CD4-positive, alpha-beta memory T cell (primary cell): ENCODE measurements at regions of chr2 and their contacts with region 1.

Region 1: DNA sequence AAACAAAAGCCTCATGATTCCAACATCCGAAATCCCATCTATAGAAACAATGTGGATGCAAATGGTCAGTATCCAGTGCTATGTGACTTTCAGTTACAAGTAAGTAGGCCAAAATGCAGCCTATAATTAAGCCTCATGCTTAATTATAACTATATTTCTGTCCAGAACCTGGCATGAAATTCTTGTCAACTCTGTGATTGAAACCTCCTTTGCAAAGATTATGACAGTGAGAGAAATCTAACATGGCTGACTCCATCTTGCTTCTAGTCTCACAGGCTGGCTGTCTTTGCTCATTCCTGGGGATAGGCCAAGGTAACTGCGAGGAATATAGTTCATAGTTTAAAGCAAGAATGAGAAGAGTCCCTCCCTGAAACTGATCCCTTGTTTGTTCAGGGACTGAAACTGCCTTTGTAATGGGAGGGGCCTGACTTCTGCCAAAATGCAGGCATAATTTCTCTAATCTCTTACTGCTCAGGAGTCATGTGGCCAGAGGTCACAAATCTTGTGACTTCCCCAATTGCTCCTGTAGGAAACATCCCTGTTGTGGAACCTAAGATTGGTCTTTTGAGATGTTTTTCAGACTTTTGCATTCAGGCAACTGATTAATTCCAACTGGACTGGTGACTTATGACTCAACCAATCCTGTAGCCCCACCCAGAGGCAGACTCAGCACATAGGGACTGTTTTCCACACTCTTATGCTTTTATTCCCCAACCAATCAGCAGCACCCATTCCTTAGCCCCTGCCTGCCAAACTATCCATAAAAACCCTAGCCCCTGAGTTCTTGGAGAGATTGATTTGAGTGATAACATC is 84.5 kb upstream of the TLK1 start:
- DNase-seq: no peak
- H3K4me3 ChIP-seq: no peak overlapping the region
- H3K4me3 Mint-ChIP-seq: peak overlapping the region in 1 of 8 donors; percentile 21
- H3K27ac ChIP-seq: no peak overlapping the region
- H3K27ac Mint-ChIP-seq: peak overlapping the region in 2 of 7 donors; percentile 3 to 23
- H3K4me1 ChIP-seq: peaks cover 44% of the 10 kb centered on the region
- H3K4me1 Mint-ChIP-seq: peaks cover 39 to 59% (median 44%) of the 10 kb centered on the region in 4 donors
- H3K27me3 ChIP-seq: no peaks in the 10 kb centered on the region
- H3K27me3 Mint-ChIP-seq: no peaks in the 10 kb centered on the region

Region 2: DNA sequence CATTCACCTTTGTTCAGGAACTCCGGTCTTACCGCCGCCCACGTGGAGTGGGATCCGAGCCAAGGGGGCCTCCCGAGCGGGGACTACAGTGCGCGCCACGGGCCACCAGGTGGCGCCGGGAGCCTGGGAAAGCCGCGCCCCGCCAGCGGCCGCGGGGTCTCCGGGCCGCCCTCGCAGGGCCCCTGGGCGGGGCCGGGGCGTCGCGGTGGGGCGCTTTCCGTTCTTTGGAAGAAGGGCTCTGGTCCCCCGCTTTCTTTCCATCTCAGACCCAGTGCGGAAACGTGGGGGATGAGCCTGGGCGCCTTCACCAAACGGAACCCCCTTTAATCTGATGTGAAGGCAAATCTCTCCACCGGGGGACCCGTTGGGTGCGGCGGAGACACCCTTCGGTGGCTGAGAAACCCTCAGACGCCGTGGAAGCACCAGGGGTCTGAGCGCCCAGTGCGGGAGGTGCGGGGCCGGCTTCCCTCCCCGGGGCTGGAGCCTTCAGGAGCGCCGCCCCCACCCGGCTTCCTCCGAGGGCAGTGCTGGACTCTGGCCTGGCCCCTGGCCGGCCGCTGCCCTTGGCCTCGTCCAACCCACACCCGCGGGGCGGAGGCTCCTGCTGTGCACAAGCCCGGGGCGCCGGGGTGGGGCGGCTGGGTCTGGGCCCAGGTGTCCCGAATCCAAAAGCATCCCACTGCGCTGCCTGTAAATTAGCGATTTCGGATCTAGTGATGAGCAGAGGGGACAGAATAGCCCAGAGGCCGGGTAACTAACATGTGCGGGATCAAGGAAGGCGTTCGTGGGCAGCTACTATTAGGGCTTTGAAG is 271.5 kb before region 1 on chr2:
- CTCF ChIA-PET with region 1: interaction called, 4 read pairs
- POLR2A ChIA-PET with region 1: no interaction called
- intact Hi-C with region 1: loop called (anchors 5 kb)
- DNase-seq: peak; percentile 87 to 91 (median 87)
- H3K4me3 ChIP-seq: peak overlapping the region; percentile 26 to 77
- H3K4me3 Mint-ChIP-seq: peak overlapping the region; percentile 81 to 88 (median 84)
- H3K27ac ChIP-seq: peak overlapping the region; percentile 52
- H3K27ac Mint-ChIP-seq: peak overlapping the region; percentile 25 to 90 (median 54)
- H3K4me1 ChIP-seq: peaks cover 14% of the 10 kb centered on the region
- H3K4me1 Mint-ChIP-seq: peaks cover 7 to 16% (median 10%) of the 10 kb centered on the region in 4 donors
- H3K27me3 ChIP-seq: no peaks in the 10 kb centered on the region
- H3K27me3 Mint-ChIP-seq: no peaks in the 10 kb centered on the region

Region 3: DNA sequence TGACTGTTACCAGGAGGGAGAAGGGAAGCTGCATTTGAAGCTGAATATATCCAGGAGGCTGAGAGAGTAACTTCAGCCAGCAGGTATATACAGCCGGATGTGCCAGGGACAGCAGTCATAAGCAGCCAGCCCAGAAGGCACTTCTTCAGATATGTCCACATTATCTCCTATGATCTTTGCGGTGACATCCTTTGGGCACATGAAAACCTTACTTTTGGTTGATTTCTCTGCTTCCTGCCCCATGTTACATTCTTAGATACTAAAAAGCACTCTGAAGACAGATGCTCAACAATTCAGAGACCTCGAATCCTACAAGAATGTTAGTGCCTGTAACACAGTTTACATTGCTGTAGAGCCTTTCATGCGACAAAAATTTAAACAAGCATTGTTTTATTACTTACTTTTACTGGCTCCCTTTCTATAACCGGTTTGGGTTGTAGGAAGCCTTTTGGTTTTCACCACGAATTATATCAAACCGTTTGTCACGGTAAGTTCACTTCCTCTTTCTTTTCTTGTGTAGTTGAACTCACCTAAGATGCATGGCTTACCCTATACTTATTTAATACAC is 34.2 kb before region 1 on chr2:
- CTCF ChIA-PET with region 1: interaction called, 10 read pairs
- POLR2A ChIA-PET with region 1: interaction called, 4 read pairs
- intact Hi-C with region 1: loop called (anchors 5 kb)
- DNase-seq: peak; percentile 56 to 76 (median 67)
- H3K4me3 ChIP-seq: peak overlapping the region in 1 of 2 donors; percentile 46
- H3K4me3 Mint-ChIP-seq: peak overlapping the region; percentile 73 to 87 (median 78)
- H3K27ac ChIP-seq: peak overlapping the region; percentile 36
- H3K27ac Mint-ChIP-seq: peak overlapping the region; percentile 62 to 90 (median 85)
- H3K4me1 ChIP-seq: peaks cover 17% of the 10 kb centered on the region
- H3K4me1 Mint-ChIP-seq: peaks cover 11 to 26% (median 15%) of the 10 kb centered on the region in 4 donors
- H3K27me3 ChIP-seq: no peaks in the 10 kb centered on the region
- H3K27me3 Mint-ChIP-seq: no peaks in the 10 kb centered on the region

Region 4: DNA sequence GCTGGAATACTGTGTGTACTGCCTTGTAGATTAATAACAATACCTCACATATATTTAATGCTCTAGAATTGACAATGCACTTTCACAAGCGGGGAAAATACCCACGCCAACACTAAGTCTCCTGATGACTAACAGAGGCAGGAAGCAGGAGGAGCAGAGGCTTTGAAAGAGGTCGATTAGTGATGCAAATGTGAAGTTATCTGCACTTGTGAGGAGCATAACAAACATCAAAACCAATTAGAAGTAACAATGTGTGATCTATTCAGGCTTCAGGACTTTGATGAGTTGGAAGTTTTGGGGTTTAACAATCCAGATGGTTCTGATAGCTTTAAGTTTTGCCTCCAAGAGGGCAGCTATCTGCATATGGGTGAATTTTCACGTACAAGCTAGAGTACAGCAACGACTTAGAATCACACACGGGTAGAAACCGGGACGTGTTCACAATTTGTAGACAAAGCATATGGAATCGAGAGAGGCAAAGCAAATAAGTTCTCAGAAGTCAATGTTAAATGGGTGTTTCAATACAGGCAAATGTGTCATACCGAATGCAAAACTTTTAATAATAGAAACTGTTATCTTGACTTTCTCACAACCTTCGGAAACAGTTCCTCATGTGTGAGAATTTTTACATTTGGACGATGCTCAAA is 74.1 kb after region 1 on chr2:
- CTCF ChIA-PET with region 1: no interaction called
- POLR2A ChIA-PET with region 1: no interaction called
- intact Hi-C with region 1: loop called (anchors 5 kb)
- DNase-seq: peak; percentile 47 to 75 (median 56)
- H3K4me3 ChIP-seq: no peak overlapping the region
- H3K4me3 Mint-ChIP-seq: peak overlapping the region; percentile 66 to 82 (median 77)
- H3K27ac ChIP-seq: peak overlapping the region; percentile 37
- H3K27ac Mint-ChIP-seq: peak overlapping the region; percentile 43 to 94 (median 77)
- H3K4me1 ChIP-seq: peaks cover 43% of the 10 kb centered on the region
- H3K4me1 Mint-ChIP-seq: peaks cover 41 to 51% (median 48%) of the 10 kb centered on the region in 4 donors
- H3K27me3 ChIP-seq: no peaks in the 10 kb centered on the region
- H3K27me3 Mint-ChIP-seq: no peaks in the 10 kb centered on the region